ENCODE measurements at regions of chr10 and their contacts with region 1.

Region 1: DNA sequence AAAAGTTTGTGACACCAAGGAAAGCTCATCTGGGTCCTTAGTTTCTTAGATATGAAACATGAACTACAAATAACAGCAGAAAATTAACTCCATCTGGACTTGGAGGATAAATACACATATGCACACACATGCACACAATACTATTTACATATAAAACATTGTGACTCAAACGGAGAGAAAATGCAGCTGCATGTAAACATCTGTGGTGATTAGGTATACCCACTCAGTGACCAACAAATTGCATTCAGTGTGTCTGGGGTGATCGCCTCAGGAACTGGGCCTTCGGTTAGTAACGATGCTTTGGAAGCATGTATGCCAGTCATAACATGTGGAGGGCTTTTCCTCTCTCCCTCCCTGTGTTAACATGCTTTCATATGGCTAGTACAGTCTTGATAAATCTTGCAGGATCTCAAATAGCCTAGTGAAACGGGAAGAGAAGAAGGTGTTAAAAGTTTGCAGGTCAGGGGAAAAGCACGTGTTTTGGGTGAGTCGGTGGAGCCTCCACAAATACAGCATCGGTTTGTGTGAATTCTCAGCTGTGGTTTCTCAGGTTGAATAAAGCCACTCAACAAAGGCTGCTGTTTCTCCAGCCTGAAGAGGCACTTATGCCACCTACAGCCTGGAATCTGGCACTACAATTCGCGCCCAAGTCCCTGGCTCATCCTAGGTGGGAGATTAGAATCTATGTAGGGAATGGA is 8.7 kb upstream of the GLRX3 start:
- DNase-seq: no peak
- H3K4me3 ChIP-seq: no peak overlapping the region
- CTCF ChIP-seq: peak; percentile 91

Region 2: DNA sequence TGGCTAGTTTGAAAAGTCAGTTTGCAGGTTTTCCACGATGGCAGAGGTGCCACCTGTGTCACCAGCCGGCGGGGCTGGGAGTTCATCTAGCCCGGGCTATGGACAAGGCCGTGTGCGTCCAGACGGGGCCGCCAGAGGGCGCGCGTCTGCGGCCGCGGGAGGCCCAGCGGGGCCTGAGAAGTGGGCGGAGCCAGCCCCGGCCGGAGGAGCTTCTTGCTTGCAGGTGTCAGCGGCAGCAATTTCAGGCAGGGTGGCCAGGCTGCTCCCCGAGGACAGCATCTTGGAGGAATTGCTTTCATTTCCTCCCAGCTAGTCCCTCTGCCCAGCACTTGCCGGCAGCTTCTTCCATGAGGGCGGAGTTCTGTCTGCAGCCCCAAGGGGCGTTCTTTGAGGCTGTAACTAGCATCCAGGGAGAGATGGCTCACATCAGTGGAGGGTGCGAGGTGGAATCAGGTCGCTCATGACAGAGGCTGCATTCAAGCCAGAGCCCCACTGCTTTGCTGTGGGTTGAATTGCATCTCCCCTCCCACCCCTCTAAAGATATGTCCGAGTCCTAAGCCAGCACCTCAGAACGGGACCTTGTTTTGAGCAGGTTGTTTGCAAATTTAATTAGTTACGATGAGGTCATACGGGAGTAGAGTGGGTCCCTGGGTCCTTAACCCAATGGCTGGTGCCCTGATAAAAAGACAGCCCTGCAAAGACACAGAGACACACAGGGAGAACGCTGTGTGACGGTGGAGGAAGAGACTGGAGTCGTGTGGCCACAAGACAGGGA is 1915.4 kb before region 1 on chr10:
- CTCF ChIA-PET with region 1: interaction called, 12 read pairs
- POLR2A ChIA-PET with region 1: no interaction called
- DNase-seq: no peak
- H3K4me3 ChIP-seq: no peak overlapping the region
- CTCF ChIP-seq: peak; percentile 92

Region 3: DNA sequence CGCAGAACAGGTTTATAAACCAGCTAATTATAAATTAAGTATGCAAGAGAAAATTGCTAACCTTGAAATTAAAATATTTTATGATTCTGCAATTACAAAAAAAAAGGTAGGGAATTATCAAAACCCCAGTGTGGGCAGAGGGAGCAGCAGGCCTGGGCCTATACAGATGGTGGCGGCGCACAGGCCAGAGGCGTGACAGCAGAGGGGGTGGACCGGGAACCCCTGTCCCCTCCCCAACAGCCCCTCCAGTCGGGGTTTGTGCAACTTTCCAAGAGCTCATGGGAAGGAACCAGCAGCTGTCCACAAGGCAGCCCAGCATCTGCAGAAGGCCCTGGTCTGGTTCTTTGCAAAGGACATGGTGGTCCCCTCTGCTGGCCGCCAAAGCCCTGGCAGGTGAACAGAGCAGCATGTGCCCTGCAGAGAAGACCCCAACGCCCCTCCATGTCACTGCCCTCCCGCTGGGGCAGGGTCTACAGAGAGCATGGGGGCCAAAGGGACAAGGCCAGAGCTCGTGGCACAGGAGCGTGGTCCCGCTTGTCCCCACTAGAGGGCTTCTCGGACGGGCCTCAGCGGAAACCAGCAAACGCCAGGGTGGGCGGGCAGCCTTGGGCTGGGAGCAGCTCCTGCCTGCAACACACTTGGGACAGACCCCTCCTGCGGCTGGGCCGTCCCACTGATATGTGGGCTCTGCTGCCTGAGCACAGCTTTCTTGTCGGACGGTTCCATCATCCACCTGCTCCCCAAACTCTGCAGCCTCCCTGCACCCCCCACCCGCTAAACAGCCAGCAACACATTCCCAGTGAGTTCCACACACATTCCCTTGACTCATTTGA is 238.5 kb before region 1 on chr10:
- CTCF ChIA-PET with region 1: interaction called, 10 read pairs
- POLR2A ChIA-PET with region 1: no interaction called
- DNase-seq: no peak
- H3K4me3 ChIP-seq: no peak overlapping the region
- CTCF ChIP-seq: peak; percentile 84

Region 4: DNA sequence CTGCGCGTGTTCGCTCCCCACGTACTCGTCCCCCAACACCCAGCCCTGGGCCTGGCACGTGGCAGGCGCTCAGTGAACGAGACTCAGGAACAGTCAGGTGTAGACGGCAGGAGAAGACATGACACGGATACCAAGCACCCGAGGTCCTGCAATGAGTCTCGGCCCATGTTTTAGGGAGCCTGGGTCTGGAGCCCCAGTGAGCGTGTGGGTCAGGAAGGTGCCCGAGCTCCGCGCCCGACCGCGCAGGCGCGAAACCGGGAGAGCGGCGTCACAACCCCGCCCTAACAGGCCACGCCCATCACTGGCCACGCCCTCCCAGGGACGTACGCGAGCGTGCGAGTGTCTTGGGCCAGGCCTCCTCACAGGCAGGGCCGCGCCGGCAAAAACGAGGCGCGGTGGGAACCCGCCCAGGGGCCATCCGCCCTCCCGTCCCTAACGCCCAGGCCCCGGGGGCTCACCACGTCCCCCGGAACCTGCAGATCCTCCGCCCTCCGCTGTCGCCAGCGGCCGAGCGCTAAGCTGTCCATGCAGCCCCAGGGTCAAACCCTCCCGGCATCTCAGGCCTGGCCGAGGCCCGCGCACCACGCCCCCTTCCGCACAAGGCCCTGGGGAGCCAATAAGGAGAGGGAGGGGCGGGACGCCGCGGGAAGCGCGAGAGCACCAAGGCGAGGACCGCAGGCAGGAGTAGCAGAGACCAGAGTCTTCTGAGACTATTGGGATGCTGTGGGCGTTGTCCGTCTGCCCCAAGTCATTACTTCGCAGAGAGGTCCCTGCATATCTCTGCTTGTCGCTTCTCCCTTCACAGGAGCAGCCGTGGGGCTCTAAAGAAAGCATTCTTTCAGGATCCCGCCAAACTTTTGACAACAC is 17.0 kb before region 1 on chr10 and contains the start of gene C10orf143:
- CTCF ChIA-PET with region 1: interaction called, 72 read pairs
- POLR2A ChIA-PET with region 1: interaction called, 4 read pairs
- DNase-seq: peak; percentile 87
- H3K4me3 ChIP-seq: peak within 1 kb of the TSS; percentile 96
- CTCF ChIP-seq: no peak

Region 5: DNA sequence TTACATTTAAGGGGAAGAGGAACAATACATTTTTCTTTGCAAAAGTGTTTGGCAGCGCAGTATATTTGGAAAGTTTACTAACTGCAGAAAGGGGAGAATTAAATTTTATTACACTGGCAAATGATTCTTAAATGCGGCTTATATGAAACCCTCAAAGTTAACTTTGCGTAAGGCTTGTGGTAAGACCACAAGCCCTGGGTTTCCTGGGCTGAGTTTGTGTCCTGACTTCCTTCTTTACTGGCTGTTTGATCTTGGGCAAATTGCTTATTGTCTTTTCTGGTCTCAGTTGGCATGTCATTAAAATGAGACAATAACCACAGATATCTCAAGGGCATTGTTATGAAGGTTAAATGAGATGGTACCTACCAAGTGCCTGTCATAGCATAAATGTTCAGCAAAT is 115.5 kb after region 1 on chr10:
- CTCF ChIA-PET with region 1: no interaction called
- POLR2A ChIA-PET with region 1: no interaction called
- DNase-seq: no peak
- H3K4me3 ChIP-seq: no peak overlapping the region
- CTCF ChIP-seq: no peak